GM12878 (cell line): ENCODE measurements at regions of chr11 and their contacts with region 1.

Region 1: GRCh38 chr11:77113382-77114088 is 10.9 kb downstream of the OMP start:
- DNase-seq: no peak
- ATAC-seq: peak; percentile 67
- H3K4me3 ChIP-seq: no peak overlapping the region
- H3K27ac ChIP-seq: no peak overlapping the region
- H3K4me1 ChIP-seq: no peaks in the 10 kb centered on the region
- H3K27me3 ChIP-seq: no peaks in the 10 kb centered on the region; a peak in 1 of 4 replicates
- CTCF ChIP-seq: peak; percentile 40 to 55 (median 48)
- EP300 ChIP-seq: no peak
- POLR2A ChIP-seq: no peak
- RAD21 ChIP-seq: 0 out of 2 replicates have a peak, but pooled peaks have one; percentile 18

Region 2: DNA sequence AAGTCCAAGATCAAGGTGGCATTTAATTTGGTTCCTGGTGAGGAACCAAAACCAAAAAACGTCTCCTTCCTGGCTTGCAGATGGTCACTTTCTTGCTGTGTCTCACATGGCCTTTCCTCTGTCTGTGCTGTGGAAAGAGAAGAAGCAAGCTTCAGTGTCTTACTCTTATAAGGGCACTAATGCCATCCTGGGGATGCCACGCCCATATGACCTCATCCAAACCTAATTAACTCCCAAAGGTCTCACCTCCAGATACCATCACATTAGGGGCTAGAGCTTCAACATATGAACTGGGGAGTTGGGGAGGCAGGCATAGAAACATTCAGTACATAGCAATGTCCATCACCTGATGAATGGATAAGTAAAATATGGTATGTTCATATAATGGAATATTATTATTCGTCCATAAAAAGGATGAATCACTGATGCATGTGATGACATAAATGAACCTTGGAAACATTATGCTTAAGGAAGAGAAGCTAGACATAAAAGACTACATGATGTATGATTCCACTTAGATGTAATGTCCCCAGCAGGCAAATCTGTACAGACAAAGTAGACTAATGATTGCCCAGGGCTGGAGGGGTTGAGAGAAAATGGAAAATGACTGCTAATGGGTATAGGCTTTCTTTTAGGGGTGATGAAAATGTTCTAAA is 157.9 kb before region 1 on chr11:
- CTCF ChIA-PET with region 1: no interaction called
- POLR2A ChIA-PET with region 1: no interaction called
- RAD21 ChIA-PET with region 1: no interaction called
- SMC1A ChIA-PET with region 1: no interaction called
- in situ Hi-C with region 1: no loop called
- intact Hi-C with region 1: no loop called
- DNase-seq: no peak
- ATAC-seq: no peak
- H3K4me3 ChIP-seq: no peak overlapping the region
- H3K27ac ChIP-seq: no peak overlapping the region
- H3K4me1 ChIP-seq: no peaks in the 10 kb centered on the region
- H3K27me3 ChIP-seq: no peaks in the 10 kb centered on the region
- CTCF ChIP-seq: no peak
- EP300 ChIP-seq: no peak
- POLR2A ChIP-seq: no peak
- RAD21 ChIP-seq: no peak

Region 3: GRCh38 chr11:77039491-77040400 is 73.8 kb before region 1 on chr11:
- CTCF ChIA-PET with region 1: no interaction called
- POLR2A ChIA-PET with region 1: no interaction called
- RAD21 ChIA-PET with region 1: no interaction called
- SMC1A ChIA-PET with region 1: no interaction called
- in situ Hi-C with region 1: no loop called
- intact Hi-C with region 1: no loop called
- DNase-seq: no peak
- ATAC-seq: 0 out of 3 replicates have a peak, but pooled peaks have one; percentile 20
- H3K4me3 ChIP-seq: no peak overlapping the region
- H3K27ac ChIP-seq: no peak overlapping the region
- H3K4me1 ChIP-seq: peaks cover 6% of the 10 kb centered on the region
- H3K27me3 ChIP-seq: peaks cover 1 to 4% of the 10 kb centered on the region in 2 experiments; a peak in 3 of 4 replicates
- CTCF ChIP-seq: peak; percentile 36 to 46 (median 41); a peak in 4 of 6 replicates
- EP300 ChIP-seq: no peak
- POLR2A ChIP-seq: no peak
- RAD21 ChIP-seq: peak; percentile 13; the same call in 1 of the 2 replicates

Region 4: DNA sequence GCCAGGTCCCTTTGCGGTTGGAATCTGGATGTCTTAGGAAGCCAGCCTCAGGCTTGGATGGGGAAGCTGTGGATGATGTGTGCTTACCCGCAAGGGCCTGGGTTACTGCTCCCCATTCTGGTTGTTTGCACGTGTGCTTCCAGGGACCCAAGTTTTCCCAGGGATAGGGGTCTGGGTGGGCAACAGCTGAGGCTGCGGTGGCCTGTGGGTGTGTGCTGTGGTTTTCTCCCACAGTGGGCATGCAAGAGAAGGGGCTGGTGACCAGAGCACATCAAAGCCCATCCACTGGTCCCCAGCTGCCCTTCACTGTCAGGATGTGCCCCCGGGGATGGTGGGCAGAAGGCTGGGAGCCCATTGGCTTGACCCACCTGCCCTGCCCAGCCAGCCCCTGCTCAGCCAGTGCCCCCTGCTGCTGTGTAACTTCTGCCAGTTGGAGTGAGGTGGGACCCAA is 43.5 kb before region 1 on chr11:
- CTCF ChIA-PET with region 1: no interaction called
- POLR2A ChIA-PET with region 1: no interaction called
- RAD21 ChIA-PET with region 1: no interaction called
- SMC1A ChIA-PET with region 1: no interaction called
- in situ Hi-C with region 1: no loop called
- intact Hi-C with region 1: no loop called
- DNase-seq: no peak
- ATAC-seq: no peak
- H3K4me3 ChIP-seq: no peak overlapping the region
- H3K27ac ChIP-seq: no peak overlapping the region
- H3K4me1 ChIP-seq: peaks cover 6% of the 10 kb centered on the region
- H3K27me3 ChIP-seq: peaks cover 0 to 1% of the 10 kb centered on the region in 2 experiments; a peak in 2 of 4 replicates
- CTCF ChIP-seq: no peak
- EP300 ChIP-seq: no peak
- POLR2A ChIP-seq: no peak
- RAD21 ChIP-seq: no peak

Region 5: GRCh38 chr11:77127232-77127911 is 13.8 kb after region 1 on chr11:
- CTCF ChIA-PET with region 1: interaction called, 20 read pairs
- POLR2A ChIA-PET with region 1: no interaction called
- RAD21 ChIA-PET with region 1: no interaction called
- SMC1A ChIA-PET with region 1: interaction called, 3 read pairs
- in situ Hi-C with region 1: no loop called
- intact Hi-C with region 1: no loop called
- DNase-seq: no peak
- ATAC-seq: peak; percentile 88
- H3K4me3 ChIP-seq: no peak overlapping the region
- H3K27ac ChIP-seq: no peak overlapping the region
- H3K4me1 ChIP-seq: 0 out of 2 replicates have a peak, but pooled peaks cover 3% of the 10 kb centered on the region
- H3K27me3 ChIP-seq: peaks cover 0 to 3% of the 10 kb centered on the region in 2 experiments; a peak in 2 of 4 replicates
- CTCF ChIP-seq: peak; percentile 84 to 99 (median 98)
- EP300 ChIP-seq: no peak
- POLR2A ChIP-seq: no peak
- RAD21 ChIP-seq: peak; percentile 59